ENCODE measurements at regions of chr6 and their contacts with region 1.

Region 1: GRCh38 chr6:28425944-28426541 is 17.2 kb downstream of the ZSCAN23 start:
- DNase-seq: no peak
- H3K4me3 Mint-ChIP-seq: no peak overlapping the region
- H3K27ac Mint-ChIP-seq: peak overlapping the region; percentile 37
- H3K4me1 Mint-ChIP-seq: peaks cover 15% of the 10 kb centered on the region
- H3K27me3 Mint-ChIP-seq: peaks cover 31% of the 10 kb centered on the region

Region 2: GRCh38 chr6:28408076-28408802 is 17.8 kb before region 1 on chr6:
- intact Hi-C with region 1: loop called (anchors 1 kb)
- DNase-seq: no peak
- H3K4me3 Mint-ChIP-seq: no peak overlapping the region
- H3K27ac Mint-ChIP-seq: peak overlapping the region; percentile 16
- H3K4me1 Mint-ChIP-seq: peaks cover 30% of the 10 kb centered on the region
- H3K27me3 Mint-ChIP-seq: peaks cover 15% of the 10 kb centered on the region